Tibial artery (tissue), 4 donors: ENCODE measurements at regions of chr17 and their contacts with region 1.

Region 1: DNA sequence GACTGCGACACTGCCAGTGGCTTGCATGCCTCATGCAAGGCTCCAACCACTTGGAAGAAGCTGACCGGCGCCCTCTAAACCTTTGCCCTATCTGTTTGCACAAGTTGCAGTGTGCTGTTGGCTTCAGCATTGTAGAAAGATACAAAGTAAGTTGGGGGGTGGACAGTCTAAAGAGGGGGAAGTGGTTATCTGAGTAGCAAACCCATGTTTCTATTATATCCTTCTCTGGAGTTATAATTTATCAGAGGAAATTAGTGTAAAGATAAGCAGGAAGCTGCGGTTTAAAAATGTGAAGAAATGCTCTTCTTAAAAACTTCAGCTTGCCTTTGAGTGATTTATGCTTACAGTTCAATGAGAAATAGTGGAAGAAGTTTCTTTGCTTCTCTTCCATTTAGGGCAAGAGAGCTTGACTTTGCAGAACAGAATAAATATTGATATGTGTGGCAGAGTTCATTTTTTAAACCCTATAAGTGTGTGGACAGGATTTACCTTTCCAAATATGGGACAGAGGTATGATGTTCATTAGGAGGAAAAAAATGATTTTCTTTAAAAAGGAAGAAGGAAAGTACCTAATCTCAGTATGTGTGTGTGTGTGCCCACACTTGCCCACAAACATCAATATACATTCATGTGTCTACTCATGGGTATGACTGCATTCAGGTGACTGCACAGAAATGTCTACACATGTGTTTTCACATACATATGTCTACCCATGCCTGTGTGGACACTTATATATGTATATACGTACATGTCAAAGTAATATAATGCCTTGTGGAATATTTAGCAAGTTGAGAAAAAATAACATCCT is 8.1 kb downstream of the AMZ2 start:
- DNase-seq: no peak
- H3K4me3 ChIP-seq: no peak overlapping the region
- H3K27ac ChIP-seq: no peak overlapping the region
- H3K4me1 ChIP-seq: peaks cover 0 to 3% (median 0%) of the 10 kb centered on the region in 4 donors
- H3K27me3 ChIP-seq: no peaks in the 10 kb centered on the region
- CTCF ChIP-seq: no peak

Region 2: GRCh38 chr17:67862614-67863217 is 393.2 kb before region 1 on chr17:
- intact Hi-C with region 1: no loop called
- DNase-seq: no peak
- H3K4me3 ChIP-seq: no peak overlapping the region
- H3K27ac ChIP-seq: no peak overlapping the region
- H3K4me1 ChIP-seq: peaks cover 0 to 12% (median 10%) of the 10 kb centered on the region in 4 donors
- H3K27me3 ChIP-seq: no peaks in the 10 kb centered on the region
- CTCF ChIP-seq: no peak

Region 3: GRCh38 chr17:68196944-68197595 is 58.9 kb before region 1 on chr17:
- intact Hi-C with region 1: no loop called
- DNase-seq: no peak
- H3K4me3 ChIP-seq: peak overlapping the region; percentile 15 to 45
- H3K27ac ChIP-seq: no peak overlapping the region
- H3K4me1 ChIP-seq: peaks cover 0 to 53% (median 52%) of the 10 kb centered on the region in 4 donors
- H3K27me3 ChIP-seq: peaks cover 0 to 65% of the 10 kb centered on the region in 2 donors
- CTCF ChIP-seq: no peak

Region 4: GRCh38 chr17:68435876-68436842 is 180.2 kb after region 1 on chr17:
- intact Hi-C with region 1: loop called (anchors 10 kb)
- DNase-seq: peak; percentile 68 to 79
- H3K4me3 ChIP-seq: no peak overlapping the region
- H3K27ac ChIP-seq: no peak overlapping the region
- H3K4me1 ChIP-seq: no peaks in the 10 kb centered on the region
- H3K27me3 ChIP-seq: no peaks in the 10 kb centered on the region
- CTCF ChIP-seq: peak; percentile 72 to 86

Region 5: GRCh38 chr17:68468334-68468733 is 212.4 kb after region 1 on chr17:
- intact Hi-C with region 1: loop called (anchors 1 kb)
- DNase-seq: no peak
- H3K4me3 ChIP-seq: no peak overlapping the region
- H3K27ac ChIP-seq: peak overlapping the region in 1 of 2 donors; percentile 59
- H3K4me1 ChIP-seq: peaks cover 0 to 20% (median 1%) of the 10 kb centered on the region in 4 donors
- H3K27me3 ChIP-seq: no peaks in the 10 kb centered on the region
- CTCF ChIP-seq: no peak